CD4-positive, alpha-beta memory T cell (primary cell): ENCODE measurements at regions of chr10 and their contacts with region 1.

Region 1: GRCh38 chr10:97072851-97073665 is 112.7 kb downstream of the SLIT1 start:
- DNase-seq: peak; percentile 63 to 75 (median 70)
- H3K4me3 ChIP-seq: no peak overlapping the region
- H3K4me3 Mint-ChIP-seq: no peak overlapping the region
- H3K27ac ChIP-seq: no peak overlapping the region
- H3K27ac Mint-ChIP-seq: no peak overlapping the region
- H3K4me1 ChIP-seq: no peaks in the 10 kb centered on the region
- H3K4me1 Mint-ChIP-seq: peaks cover 5 to 11% (median 7%) of the 10 kb centered on the region in 4 donors
- H3K27me3 ChIP-seq: no peaks in the 10 kb centered on the region
- H3K27me3 Mint-ChIP-seq: peaks cover 12 to 36% of the 10 kb centered on the region in 2 donors

Region 2: GRCh38 chr10:97059006-97059871 is 13.8 kb before region 1 on chr10:
- CTCF ChIA-PET with region 1: interaction called, 10 read pairs
- POLR2A ChIA-PET with region 1: no interaction called
- intact Hi-C with region 1: no loop called
- DNase-seq: no peak
- H3K4me3 ChIP-seq: no peak overlapping the region
- H3K4me3 Mint-ChIP-seq: no peak overlapping the region
- H3K27ac ChIP-seq: no peak overlapping the region
- H3K27ac Mint-ChIP-seq: no peak overlapping the region
- H3K4me1 ChIP-seq: no peaks in the 10 kb centered on the region
- H3K4me1 Mint-ChIP-seq: no peaks in the 10 kb centered on the region
- H3K27me3 ChIP-seq: no peaks in the 10 kb centered on the region
- H3K27me3 Mint-ChIP-seq: peaks cover 0 to 2% of the 10 kb centered on the region in 2 donors

Region 3: DNA sequence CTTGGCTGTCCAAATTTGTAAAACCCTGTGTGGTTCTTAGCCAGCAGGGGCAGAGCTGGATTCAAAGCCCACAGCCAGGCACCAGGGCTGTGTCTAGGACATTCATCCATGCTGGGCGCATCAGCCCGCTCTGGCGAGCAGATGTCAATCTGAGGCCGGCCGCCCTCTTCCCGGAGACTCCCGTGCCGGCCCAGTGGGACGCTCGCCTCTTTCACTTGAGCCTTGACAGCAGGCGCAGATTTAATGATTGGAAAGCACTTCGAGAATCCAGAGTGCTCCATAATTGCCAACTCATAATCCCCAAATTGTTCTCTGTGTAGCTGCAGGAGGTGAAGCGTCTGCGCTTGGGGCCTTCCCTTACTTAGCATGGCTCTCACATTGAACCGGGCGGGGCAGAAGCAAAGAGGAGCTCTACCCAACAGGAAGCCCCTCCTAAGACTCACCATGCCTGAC is 76.0 kb after region 1 on chr10:
- CTCF ChIA-PET with region 1: no interaction called
- POLR2A ChIA-PET with region 1: no interaction called
- intact Hi-C with region 1: no loop called
- DNase-seq: no peak
- H3K4me3 ChIP-seq: no peak overlapping the region
- H3K4me3 Mint-ChIP-seq: no peak overlapping the region
- H3K27ac ChIP-seq: no peak overlapping the region
- H3K27ac Mint-ChIP-seq: no peak overlapping the region
- H3K4me1 ChIP-seq: no peaks in the 10 kb centered on the region
- H3K4me1 Mint-ChIP-seq: no peaks in the 10 kb centered on the region
- H3K27me3 ChIP-seq: no peaks in the 10 kb centered on the region
- H3K27me3 Mint-ChIP-seq: no peaks in the 10 kb centered on the region

Region 4: DNA sequence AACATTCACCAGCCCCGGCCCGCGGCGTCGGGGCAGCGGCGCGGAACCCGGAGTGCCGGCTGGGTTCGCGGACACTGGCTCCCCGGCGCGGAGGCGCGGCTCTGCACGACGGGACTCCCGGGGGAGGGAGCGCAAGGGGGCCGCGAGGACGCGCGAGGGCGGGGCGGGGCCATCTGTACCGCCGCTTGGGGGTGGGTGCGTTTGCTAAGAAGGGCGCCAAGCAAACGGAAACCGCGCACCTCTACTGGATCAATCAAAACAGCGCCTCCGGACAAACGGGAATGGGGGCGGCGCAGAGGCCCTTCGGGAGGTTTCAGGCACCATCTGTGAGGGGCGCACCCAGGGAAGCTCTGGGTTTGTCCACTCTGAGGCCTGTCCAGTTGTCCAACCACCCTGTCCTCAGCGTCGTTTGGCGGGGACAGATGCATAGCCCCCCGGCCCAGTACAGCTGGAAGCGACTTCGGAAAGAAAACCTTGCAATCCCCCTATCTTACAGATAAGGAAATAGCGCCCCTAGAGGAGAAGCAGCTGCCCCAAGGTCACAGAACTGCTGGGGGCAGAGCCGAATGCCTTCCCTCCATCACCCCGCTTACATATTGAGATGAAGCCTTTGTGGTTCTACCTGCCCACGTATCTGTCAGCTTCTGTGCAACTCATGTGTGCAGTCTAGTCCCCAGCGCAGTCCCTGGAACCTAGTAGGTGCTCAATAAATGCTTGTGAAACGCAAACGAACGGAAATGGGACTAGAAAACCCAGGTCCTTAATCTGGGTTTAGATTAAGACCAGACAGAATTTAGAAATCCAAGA is 123.4 kb after region 1 on chr10:
- CTCF ChIA-PET with region 1: interaction called, 417 read pairs
- POLR2A ChIA-PET with region 1: no interaction called
- intact Hi-C with region 1: no loop called
- DNase-seq: peak; percentile 62 to 73 (median 66)
- H3K4me3 ChIP-seq: peak overlapping the region; percentile 52 to 64
- H3K4me3 Mint-ChIP-seq: peak overlapping the region; percentile 83 to 91 (median 86)
- H3K27ac ChIP-seq: no peak overlapping the region
- H3K27ac Mint-ChIP-seq: peak overlapping the region in 4 of 7 donors; percentile 25 to 70 (median 36)
- H3K4me1 ChIP-seq: peaks cover 6% of the 10 kb centered on the region
- H3K4me1 Mint-ChIP-seq: peaks cover 6 to 11% (median 7%) of the 10 kb centered on the region in 4 donors
- H3K27me3 ChIP-seq: no peaks in the 10 kb centered on the region
- H3K27me3 Mint-ChIP-seq: peaks cover 8 to 10% of the 10 kb centered on the region in 2 donors

Region 5: GRCh38 chr10:97217299-97217698 is 144.2 kb after region 1 on chr10:
- CTCF ChIA-PET with region 1: interaction called, 417 read pairs
- POLR2A ChIA-PET with region 1: no interaction called
- intact Hi-C with region 1: no loop called
- DNase-seq: no peak
- H3K4me3 ChIP-seq: no peak overlapping the region
- H3K4me3 Mint-ChIP-seq: no peak overlapping the region
- H3K27ac ChIP-seq: no peak overlapping the region
- H3K27ac Mint-ChIP-seq: no peak overlapping the region
- H3K4me1 ChIP-seq: no peaks in the 10 kb centered on the region
- H3K4me1 Mint-ChIP-seq: peaks cover 6 to 10% (median 7%) of the 10 kb centered on the region in 4 donors
- H3K27me3 ChIP-seq: no peaks in the 10 kb centered on the region
- H3K27me3 Mint-ChIP-seq: no peaks in the 10 kb centered on the region

Region 6: DNA sequence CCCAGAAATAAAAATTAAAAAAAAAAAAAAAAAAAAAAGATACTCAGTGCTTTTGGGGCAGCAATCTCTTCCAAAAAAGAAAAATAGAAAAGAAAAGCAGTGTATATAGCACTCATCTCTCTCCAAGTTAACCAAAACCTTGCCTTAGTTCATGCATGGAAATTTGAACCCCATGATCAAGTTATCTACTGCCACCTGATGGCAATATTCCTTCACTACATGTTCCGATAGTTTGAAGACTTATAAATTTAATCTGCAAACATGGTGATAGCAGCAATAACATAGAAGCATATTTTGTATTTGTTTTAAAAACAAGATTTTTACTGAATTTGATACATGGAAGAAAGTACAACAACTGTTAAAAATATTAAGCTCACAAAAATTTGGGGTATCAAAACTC is 161.3 kb after region 1 on chr10:
- CTCF ChIA-PET with region 1: interaction called, 13 read pairs
- POLR2A ChIA-PET with region 1: no interaction called
- intact Hi-C with region 1: loop called (anchors 1 kb)
- DNase-seq: peak in 3 of 5 donors; percentile 2 to 6 (median 3)
- H3K4me3 ChIP-seq: no peak overlapping the region
- H3K4me3 Mint-ChIP-seq: no peak overlapping the region
- H3K27ac ChIP-seq: no peak overlapping the region
- H3K27ac Mint-ChIP-seq: no peak overlapping the region
- H3K4me1 ChIP-seq: no peaks in the 10 kb centered on the region
- H3K4me1 Mint-ChIP-seq: peaks cover 0 to 2% (median under 1%) of the 10 kb centered on the region in 4 donors
- H3K27me3 ChIP-seq: no peaks in the 10 kb centered on the region
- H3K27me3 Mint-ChIP-seq: no peaks in the 10 kb centered on the region